ENCODE measurements at regions of chr17 and their contacts with region 1.

Region 1: GRCh38 chr17:55845385-55845784 is 94.5 kb downstream of the PCTP start:
- DNase-seq: peak; percentile 70
- ATAC-seq: peak; percentile 94

Region 2: DNA sequence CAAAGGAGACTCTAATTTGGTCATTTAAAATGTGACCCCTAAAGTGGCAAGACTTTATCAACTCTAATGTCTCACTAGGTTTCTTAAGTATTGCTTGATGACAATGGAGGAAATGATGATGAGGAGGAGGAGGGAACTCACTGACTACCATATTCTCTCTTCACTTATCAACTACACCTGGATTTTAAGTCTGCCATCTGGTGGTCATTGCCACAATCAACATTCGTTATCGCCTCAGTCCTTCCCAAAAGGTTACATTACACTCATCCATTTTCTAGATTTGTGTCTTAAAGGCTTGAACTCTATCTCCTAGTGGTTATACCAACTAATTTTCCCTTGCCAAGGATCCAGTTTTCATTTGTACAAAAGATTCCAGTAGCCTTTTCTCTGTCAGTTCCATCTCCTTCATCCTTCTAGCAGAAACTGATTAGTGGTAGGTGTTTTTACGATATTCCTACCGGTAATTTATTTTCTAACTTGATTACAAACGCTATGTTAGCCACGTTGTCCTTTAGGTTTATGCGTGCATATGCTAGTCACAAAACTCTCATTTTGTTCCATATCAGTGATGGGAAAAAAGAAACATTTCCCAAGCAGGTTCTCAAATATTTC is 633.6 kb after region 1 on chr17:
- intact Hi-C with region 1: loop called (anchors 10 kb)
- DNase-seq: no peak
- ATAC-seq: no peak

Measured in Right ventricle myocardium superior (tissue), 1 donor.